ENCODE measurements at regions of chr3 and their contacts with region 1.

Region 1: GRCh38 chr3:133965013-133965570 is 64.6 kb downstream of the SLCO2A1 start:
- DNase-seq: no peak
- H3K4me3 ChIP-seq: no peak overlapping the region
- H3K27ac ChIP-seq: no peak overlapping the region
- H3K4me1 ChIP-seq: no peaks in the 10 kb centered on the region
- H3K27me3 ChIP-seq: no peaks in the 10 kb centered on the region
- CTCF ChIP-seq: no peak

Region 2: DNA sequence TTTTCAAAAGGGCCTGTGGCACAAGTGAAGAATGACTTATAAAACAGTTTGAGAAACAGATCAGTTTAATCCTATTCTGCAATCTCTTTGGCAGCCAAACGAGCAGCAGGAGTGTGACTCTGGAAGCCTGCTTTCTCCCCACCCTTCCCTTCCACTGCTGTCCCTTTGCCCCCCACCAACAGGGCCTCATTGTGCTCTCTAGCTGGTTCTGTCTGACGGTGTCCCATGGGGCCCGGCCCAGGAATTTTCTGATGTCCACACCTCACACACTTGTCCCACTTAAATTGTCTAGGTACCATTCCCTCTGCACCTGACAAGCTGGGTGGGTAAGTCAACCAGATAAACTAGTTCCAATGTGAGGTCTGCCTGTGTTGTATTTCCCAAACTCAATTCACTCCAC is 48.2 kb after region 1 on chr3:
- CTCF ChIA-PET with region 1: no interaction called
- dilution Hi-C with region 1: loop called (anchors 5 kb)
- in situ Hi-C with region 1: no loop called
- intact Hi-C with region 1: no loop called
- DNase-seq: no peak
- H3K4me3 ChIP-seq: no peak overlapping the region
- H3K27ac ChIP-seq: no peak overlapping the region
- H3K4me1 ChIP-seq: peaks cover 29% of the 10 kb centered on the region
- H3K27me3 ChIP-seq: no peaks in the 10 kb centered on the region
- CTCF ChIP-seq: no peak

Measured in mammary epithelial cell (primary cell).